ENCODE measurements at regions of chr2 and their contacts with region 1.

Region 1: GRCh38 chr2:33441235-33441810 is 35.1 kb upstream of the RASGRP3 start:
- DNase-seq: peak; percentile 71
- H3K4me3 Mint-ChIP-seq: no peak overlapping the region
- H3K27ac Mint-ChIP-seq: no peak overlapping the region
- H3K4me1 Mint-ChIP-seq: no peaks in the 10 kb centered on the region
- H3K27me3 Mint-ChIP-seq: no peaks in the 10 kb centered on the region
- CTCF ChIP-seq: peak; percentile 80

Region 2: GRCh38 chr2:32918774-32919173 is 522.5 kb before region 1 on chr2:
- CTCF ChIA-PET with region 1: no interaction called
- POLR2A ChIA-PET with region 1: no interaction called
- intact Hi-C with region 1: no loop called
- DNase-seq: no peak
- H3K4me3 Mint-ChIP-seq: no peak overlapping the region
- H3K27ac Mint-ChIP-seq: no peak overlapping the region
- H3K4me1 Mint-ChIP-seq: no peaks in the 10 kb centered on the region
- H3K27me3 Mint-ChIP-seq: peaks cover 14% of the 10 kb centered on the region
- CTCF ChIP-seq: no peak

Region 3: DNA sequence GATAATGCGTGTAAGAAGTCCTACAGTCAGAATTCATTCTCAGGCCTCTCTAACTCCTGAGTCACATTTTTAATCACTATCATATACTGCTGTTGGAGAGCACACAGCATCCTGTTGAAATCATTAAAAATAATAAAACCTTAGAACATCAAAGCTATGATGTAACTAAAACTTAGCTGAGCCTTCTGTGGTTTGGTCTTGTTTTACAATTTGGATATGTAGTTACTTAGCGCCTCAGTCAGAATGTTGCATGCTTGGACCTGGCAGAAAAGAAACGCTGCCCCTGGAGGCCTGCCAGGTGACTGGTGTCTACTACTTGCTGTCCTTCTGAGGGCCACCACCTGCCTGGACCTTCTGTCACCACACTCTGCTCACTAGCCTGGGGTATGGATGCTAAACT is 226.0 kb before region 1 on chr2:
- CTCF ChIA-PET with region 1: no interaction called
- POLR2A ChIA-PET with region 1: no interaction called
- intact Hi-C with region 1: no loop called
- DNase-seq: peak; percentile 83
- H3K4me3 Mint-ChIP-seq: no peak overlapping the region
- H3K27ac Mint-ChIP-seq: no peak overlapping the region
- H3K4me1 Mint-ChIP-seq: peaks cover 63% of the 10 kb centered on the region
- H3K27me3 Mint-ChIP-seq: no peaks in the 10 kb centered on the region
- CTCF ChIP-seq: no peak

Region 4: DNA sequence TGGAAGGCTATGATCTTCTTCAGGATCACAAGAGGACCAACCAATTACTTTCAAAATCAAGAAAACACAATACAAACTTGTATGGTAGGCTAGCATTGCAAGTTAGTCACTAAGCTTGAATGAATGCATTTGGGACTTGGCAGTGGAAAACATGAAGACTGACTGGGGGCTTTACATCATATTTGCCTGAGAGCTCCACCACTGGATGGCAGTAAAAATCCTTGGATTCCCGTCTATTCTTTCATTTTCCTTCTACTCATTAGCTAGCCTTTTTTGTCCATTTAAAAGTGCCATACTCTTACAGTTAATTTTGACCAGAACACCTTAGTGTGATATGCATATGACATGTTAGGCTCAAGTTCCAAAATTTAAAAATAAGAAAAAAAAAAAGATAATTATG is 28.4 kb before region 1 on chr2:
- CTCF ChIA-PET with region 1: interaction called, 19 read pairs
- POLR2A ChIA-PET with region 1: no interaction called
- intact Hi-C with region 1: loop called (anchors 1 kb)
- DNase-seq: peak; percentile 55
- H3K4me3 Mint-ChIP-seq: no peak overlapping the region
- H3K27ac Mint-ChIP-seq: no peak overlapping the region
- H3K4me1 Mint-ChIP-seq: peaks cover 5% of the 10 kb centered on the region
- H3K27me3 Mint-ChIP-seq: no peaks in the 10 kb centered on the region
- CTCF ChIP-seq: peak; percentile 45

Region 5: DNA sequence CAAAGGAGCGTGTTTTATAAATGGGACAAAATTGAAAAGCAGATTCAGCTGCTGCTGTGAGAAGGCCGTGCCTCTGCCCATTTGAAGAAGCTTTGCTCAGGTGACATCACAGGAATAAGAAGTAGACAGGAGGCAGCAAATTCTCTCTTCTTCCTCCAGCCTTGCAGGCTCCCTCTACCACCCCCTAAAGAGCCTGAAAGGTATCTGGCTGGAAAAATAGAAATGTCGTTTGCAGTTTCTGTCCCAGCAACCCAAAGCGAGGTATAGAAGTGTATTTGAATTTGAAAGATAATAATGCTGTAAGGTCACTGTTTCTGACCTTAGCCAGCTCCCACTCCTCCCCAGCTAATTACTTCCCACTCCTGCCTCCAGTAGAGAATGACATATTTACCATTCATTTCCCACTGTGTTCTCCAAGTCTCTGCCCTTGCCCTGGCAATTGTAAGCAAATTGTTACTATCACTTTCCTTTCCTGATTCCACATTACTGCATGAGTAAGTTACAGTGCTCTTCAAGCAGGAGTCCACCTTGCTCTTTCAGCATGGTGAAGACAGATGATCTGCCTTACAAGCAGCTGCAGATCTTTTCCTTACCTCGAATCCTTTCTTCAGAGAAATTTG is 21.6 kb before region 1 on chr2:
- CTCF ChIA-PET with region 1: interaction called, 19 read pairs
- POLR2A ChIA-PET with region 1: no interaction called
- intact Hi-C with region 1: no loop called
- DNase-seq: no peak
- H3K4me3 Mint-ChIP-seq: no peak overlapping the region
- H3K27ac Mint-ChIP-seq: no peak overlapping the region
- H3K4me1 Mint-ChIP-seq: no peaks in the 10 kb centered on the region
- H3K27me3 Mint-ChIP-seq: no peaks in the 10 kb centered on the region
- CTCF ChIP-seq: no peak

Region 6: DNA sequence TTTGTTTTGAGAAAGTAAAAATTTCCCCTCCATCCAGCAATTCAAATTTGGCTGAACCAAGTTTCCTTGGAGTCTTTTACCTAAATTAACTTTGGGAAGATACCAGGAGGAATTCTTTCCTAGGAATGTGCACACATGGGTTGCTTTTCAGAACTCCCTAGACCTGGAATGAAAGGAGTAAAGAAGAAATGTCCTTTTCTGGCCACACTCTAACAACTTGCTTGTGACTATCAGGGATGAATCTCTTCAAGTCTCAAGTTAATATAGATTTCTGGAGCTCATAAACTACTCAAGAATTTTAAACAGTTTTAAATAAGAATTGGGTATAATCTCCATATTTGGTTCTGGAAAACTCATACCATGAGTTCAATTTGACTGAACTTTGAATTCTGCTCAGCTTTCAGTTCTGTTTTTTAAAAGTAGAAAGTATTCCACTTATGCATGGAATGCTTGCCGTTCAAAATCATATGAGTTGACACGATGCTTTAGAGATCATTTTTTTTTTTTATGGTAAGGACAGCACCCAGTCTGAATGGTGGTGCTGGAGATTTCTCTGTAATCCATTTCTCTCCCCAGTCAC is 42.8 kb after region 1 on chr2:
- CTCF ChIA-PET with region 1: no interaction called
- POLR2A ChIA-PET with region 1: no interaction called
- intact Hi-C with region 1: no loop called
- DNase-seq: no peak
- H3K4me3 Mint-ChIP-seq: no peak overlapping the region
- H3K27ac Mint-ChIP-seq: no peak overlapping the region
- H3K4me1 Mint-ChIP-seq: no peaks in the 10 kb centered on the region
- H3K27me3 Mint-ChIP-seq: no peaks in the 10 kb centered on the region
- CTCF ChIP-seq: no peak

Region 7: GRCh38 chr2:33573657-33574056 is 132.3 kb after region 1 on chr2:
- CTCF ChIA-PET with region 1: no interaction called
- POLR2A ChIA-PET with region 1: no interaction called
- intact Hi-C with region 1: no loop called
- DNase-seq: no peak
- H3K4me3 Mint-ChIP-seq: no peak overlapping the region
- H3K27ac Mint-ChIP-seq: no peak overlapping the region
- H3K4me1 Mint-ChIP-seq: no peaks in the 10 kb centered on the region
- H3K27me3 Mint-ChIP-seq: no peaks in the 10 kb centered on the region
- CTCF ChIP-seq: no peak